Right ventricle myocardium superior (tissue), 1 donor: ENCODE measurements at regions of chr7 and their contacts with region 1.

Region 1: DNA sequence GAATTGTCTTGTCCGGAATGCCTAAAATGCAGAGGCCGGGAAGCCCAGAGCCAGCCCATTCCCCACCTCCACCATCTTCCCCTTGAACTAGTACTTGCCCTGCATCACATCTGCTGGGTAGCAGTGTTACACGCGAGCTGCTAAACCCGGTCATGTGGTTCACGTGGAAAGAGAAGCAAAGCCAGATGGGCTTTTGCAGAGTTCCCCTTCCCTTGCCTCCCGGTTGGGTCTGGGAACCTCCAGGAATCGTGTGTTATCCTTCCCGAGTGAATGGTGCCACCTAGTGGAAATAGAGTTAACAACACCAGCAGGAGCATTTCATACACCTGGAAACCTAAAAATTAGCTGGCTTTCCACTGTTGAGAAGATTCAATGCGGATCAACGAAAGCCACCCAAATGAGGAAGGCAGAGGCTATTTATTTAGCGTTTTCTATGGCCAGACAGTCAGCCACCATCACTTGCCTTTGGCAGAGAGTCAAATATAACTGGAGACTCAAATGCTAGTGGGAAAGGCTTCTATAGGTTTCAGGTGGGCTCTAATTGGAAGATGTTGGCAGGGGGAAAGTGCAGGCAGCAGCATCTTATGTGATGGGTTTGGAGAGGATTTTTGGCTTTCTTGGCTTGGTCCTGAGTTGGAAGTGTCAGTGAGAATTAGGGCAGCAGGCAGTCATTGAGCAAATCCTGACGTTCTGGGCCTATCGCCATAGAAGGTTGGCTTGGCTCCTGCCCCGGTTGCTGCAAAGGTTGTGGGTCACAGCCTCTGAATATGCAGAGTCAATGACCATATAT is 12.9 kb upstream of the DENND2A start:
- DNase-seq: no peak
- ATAC-seq: peak; percentile 82

Region 2: DNA sequence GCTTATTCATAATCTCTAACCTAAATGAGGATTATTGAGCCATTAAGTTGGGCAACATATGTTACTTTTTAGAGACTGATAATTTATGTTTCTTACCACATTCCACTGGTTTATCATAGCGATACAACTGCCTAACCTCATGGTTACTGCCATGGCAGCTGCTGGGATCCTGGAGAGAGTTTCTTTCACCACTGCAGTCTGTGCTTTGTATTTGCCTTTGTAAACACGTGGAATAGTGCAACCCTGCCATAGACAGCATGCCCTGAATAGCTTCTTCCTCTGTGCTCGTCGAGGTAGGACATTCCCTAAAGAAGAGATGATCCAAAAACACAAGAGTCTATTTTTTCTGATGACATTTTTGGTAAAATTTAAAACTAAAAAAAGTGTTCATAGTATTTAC is 557.1 kb before region 1 on chr7:
- intact Hi-C with region 1: no loop called
- DNase-seq: no peak
- ATAC-seq: no peak

Region 3: DNA sequence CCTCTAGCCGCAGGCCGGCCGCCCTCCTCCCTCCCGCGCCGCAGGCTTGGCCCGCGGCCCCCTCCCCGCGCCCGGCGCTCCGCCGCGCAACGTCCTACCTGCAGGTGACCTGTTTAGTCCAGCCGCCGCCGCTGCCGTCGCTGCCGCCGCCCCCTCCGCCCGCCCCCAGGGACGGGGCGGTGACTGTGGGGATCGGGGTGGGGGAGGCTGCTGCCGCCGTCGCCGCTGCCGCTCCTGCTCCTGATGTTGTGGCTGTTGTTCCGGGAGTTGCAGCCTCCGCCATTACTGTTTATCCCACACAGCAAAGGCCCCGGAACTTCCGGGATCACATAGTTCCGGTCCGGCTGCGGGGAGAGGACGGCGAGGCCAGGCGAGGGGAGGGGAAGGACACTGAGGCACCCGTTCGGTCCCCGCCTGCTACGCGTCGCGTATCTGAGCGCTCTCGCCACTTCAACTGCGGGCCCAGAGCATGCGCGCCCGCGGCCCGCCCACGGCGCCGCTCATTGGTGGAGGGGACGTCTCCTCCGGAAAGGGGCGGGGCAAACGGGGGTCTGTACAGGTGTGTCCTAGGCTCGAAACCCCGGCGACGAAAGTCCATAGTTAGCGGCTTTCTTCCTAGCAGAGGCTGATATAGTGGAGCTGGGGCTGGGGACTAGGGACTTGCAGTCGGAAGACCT is 174.3 kb before region 1 on chr7 and contains the start of gene MKRN1:
- intact Hi-C with region 1: loop called (anchors 5 kb)
- DNase-seq: peak; percentile 97
- ATAC-seq: peak; percentile 98
- total RNA-seq, gene MKRN1: 94.7 TPM

Region 4: GRCh38 chr7:140517546-140518369 is 135.8 kb before region 1 on chr7:
- intact Hi-C with region 1: loop called (anchors 2 kb)
- DNase-seq: peak; percentile 94
- ATAC-seq: peak; percentile 94